ENCODE measurements at regions of chr3 and their contacts with region 1.

Region 1: GRCh38 chr3:11601446-11602238 is 42.1 kb downstream of the VGLL4 start:
- DNase-seq: no peak
- H3K4me3 ChIP-seq: 0 out of 2 replicates have a peak overlapping the region, but pooled peaks have one; percentile 2
- H3K27ac ChIP-seq: peak overlapping the region; percentile 99
- H3K27me3 ChIP-seq: no peaks in the 10 kb centered on the region
- CTCF ChIP-seq: no peak

Region 2: GRCh38 chr3:11558002-11558401 is 43.6 kb before region 1 on chr3:
- CTCF ChIA-PET with region 1: no interaction called
- POLR2A ChIA-PET with region 1: interaction called, 10 read pairs
- DNase-seq: no peak
- H3K4me3 ChIP-seq: no peak overlapping the region
- H3K27ac ChIP-seq: peak overlapping the region; percentile 78
- H3K27me3 ChIP-seq: no peaks in the 10 kb centered on the region
- CTCF ChIP-seq: no peak

Region 3: GRCh38 chr3:11591391-11592282 is 10.0 kb before region 1 on chr3:
- CTCF ChIA-PET with region 1: no interaction called
- POLR2A ChIA-PET with region 1: interaction called, 17 read pairs
- DNase-seq: no peak
- H3K4me3 ChIP-seq: no peak overlapping the region
- H3K27ac ChIP-seq: peak overlapping the region; percentile 92
- H3K27me3 ChIP-seq: no peaks in the 10 kb centered on the region
- CTCF ChIP-seq: no peak

Region 4: DNA sequence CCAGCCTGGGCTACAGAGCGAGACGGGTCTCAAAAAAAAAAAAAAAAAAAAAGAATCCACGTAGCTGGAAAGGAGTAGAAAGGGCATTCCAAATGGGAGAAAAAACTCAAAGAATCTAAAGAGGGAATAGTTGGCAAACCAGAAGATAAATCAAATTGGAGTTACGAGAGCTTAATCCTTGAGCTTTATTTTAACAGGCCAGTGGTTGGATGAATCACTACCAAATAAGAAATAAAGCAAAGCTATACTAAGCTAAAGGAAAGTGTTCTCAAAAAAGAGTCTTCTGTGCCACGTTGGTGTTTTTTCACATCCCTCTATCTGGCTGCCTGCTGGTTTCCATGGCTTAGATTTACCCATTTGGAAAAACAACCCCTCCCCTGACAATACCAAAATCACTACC is 28.1 kb after region 1 on chr3:
- CTCF ChIA-PET with region 1: no interaction called
- POLR2A ChIA-PET with region 1: interaction called, 28 read pairs
- DNase-seq: peak; percentile 59
- H3K4me3 ChIP-seq: no peak overlapping the region
- H3K27ac ChIP-seq: peak overlapping the region; percentile 77
- H3K27me3 ChIP-seq: no peaks in the 10 kb centered on the region
- CTCF ChIP-seq: no peak

Region 5: DNA sequence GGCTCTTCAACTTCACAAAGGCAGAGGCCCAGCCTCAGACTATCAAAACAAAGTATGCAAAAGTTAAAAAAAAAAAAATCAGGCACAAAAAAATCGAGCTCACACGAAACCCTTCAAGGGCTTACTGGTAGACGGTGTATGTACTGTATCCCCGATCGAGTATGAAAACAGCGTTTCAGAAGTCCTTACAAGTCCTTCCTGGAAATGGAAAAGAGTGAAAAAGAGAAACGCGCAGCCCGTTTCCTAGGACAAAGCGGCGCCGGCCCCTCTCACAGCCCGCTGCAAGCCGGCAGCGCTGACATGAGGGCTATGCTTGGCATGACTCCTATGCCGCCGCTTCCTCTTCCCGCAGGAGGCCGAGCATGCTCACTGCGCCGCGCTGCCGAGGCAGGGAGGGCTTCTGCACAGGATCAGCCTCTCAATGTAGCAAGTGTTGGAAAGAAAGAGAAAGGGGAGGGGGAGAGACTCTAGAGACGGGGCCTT is 42.0 kb after region 1 on chr3 and contains the start of gene VGLL4:
- CTCF ChIA-PET with region 1: interaction called, 3 read pairs
- POLR2A ChIA-PET with region 1: interaction called, 14 read pairs
- DNase-seq: peak; percentile 84
- H3K4me3 ChIP-seq: peak within 1 kb of the TSS; percentile 94
- H3K27ac ChIP-seq: peak within 1 kb of the TSS; percentile 96
- H3K27me3 ChIP-seq: no peaks in the 10 kb centered on the region
- CTCF ChIP-seq: peak; percentile 20; the same call in 1 of the 2 replicates
- polyA plus RNA-seq, gene VGLL4: 27.6 and 30.5 TPM in 2 replicates

Region 6: GRCh38 chr3:11846281-11847034 is 244.8 kb after region 1 on chr3 and contains the start of gene TAMM41:
- CTCF ChIA-PET with region 1: no interaction called
- POLR2A ChIA-PET with region 1: no interaction called
- DNase-seq: peak; percentile 45
- H3K4me3 ChIP-seq: peak within 1 kb of the TSS; percentile 95
- H3K27ac ChIP-seq: peak within 1 kb of the TSS; percentile 57
- H3K27me3 ChIP-seq: peaks cover 3% of the 10 kb centered on the region
- CTCF ChIP-seq: peak; percentile 69
- polyA plus RNA-seq, gene TAMM41: 12.4 and 12.7 TPM in 2 replicates

Measured in AG04450 (cell line).